ENCODE measurements at regions of chr5 and their contacts with region 1.

Region 1: DNA sequence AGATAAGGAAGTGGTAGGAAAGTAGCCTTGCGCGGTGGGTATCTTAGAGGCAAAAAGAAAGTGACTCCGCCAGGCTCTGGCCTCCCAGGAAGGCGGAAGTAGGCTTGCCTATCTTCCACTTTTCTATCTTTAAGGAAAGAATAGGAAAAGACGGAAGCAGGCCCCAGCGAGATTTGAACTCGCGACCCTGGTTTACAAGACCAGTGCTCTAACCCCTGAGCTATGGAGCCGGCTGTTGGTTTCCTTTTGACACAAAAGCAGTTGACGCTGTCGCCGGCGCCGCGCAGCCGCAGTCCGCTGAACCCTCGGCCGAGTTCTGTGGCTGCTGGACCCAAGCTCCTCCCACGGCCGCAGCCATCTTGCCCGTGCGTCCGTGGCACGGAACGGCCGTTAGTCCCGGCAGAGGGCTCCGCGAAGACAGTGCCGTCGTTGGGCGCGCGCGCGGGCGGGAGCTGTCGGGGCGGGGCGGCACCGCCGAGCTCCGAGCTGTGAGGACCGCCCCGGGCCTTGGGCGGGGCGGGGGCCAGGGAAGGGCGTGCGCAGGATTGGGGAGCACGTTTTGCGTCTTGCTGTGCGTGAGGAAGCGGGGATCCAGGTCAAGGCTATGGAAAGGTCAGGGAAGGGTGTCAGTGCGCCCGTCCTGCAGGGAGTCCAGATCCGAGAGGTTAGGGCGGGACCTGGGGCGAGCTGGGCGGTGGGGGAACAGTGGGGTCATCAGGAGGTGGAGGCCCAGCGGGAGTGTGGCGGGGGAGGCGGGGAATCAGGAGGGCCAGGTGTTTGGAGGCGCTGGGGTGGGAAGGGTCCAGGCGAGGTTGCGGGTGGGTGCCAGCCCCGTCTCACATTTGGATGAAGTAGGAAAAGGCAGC is 13.2 kb downstream of the TRIM7 start:
- DNase-seq: peak; percentile 96 to 97
- ATAC-seq: peak; percentile 90
- H3K4me3 ChIP-seq: peak overlapping the region; percentile 56 to 75
- H3K27ac ChIP-seq: peak overlapping the region in 1 of 2 donors; percentile 55
- H3K4me1 ChIP-seq: no peaks in the 10 kb centered on the region
- H3K27me3 ChIP-seq: no peaks in the 10 kb centered on the region

Region 2: GRCh38 chr5:180885872-180886418 is 305.8 kb before region 1 on chr5:
- intact Hi-C with region 1: no loop called
- DNase-seq: no peak
- ATAC-seq: no peak
- H3K4me3 ChIP-seq: no peak overlapping the region
- H3K27ac ChIP-seq: no peak overlapping the region
- H3K4me1 ChIP-seq: no peaks in the 10 kb centered on the region
- H3K27me3 ChIP-seq: no peaks in the 10 kb centered on the region

Region 3: DNA sequence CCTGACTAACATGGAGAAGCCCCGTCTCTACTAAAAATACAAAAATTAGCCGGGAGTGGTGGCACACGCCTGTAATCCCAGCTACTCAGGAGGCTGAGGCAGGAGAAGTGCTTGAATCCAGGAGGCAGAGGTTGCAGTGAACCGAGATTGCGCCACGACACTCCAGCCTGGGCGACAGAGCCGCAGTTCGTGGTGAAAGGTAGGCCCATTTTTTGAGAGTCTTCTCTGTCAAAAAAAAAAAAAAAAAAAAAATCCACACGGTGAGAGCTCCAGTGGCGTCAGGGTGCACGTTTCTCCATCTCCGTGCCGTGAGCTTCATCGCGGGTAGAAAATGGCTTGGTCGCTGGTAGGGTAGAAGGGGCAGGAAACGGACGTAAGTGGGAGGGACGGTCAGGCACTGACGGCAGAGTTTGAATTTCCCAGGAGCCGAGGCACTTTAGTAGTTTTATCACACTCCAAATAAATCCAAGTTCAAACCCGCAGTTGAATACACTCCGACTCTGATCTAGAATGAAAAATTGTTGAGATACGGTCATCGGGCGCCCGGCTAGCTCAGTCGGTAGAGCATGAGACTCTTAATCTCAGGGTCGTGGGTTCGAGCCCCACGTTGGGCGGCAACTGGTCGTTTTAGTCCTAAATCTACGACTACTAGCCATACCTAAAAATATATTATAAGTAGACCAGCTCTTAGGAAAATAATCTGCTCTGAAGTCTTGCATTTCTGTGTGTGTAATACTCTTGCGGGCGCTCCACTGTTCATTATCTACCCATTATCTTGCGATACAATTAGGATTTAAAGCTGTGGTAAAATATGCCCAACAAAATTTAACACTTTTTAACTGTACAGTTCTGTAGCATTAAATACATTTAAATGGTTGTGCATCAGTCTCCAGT is 15.7 kb after region 1 on chr5:
- intact Hi-C with region 1: loop called (anchors 1 to 2 kb)
- DNase-seq: peak; percentile 77 to 94
- ATAC-seq: peak; percentile 84
- H3K4me3 ChIP-seq: peak overlapping the region; percentile 16 to 36
- H3K27ac ChIP-seq: peak overlapping the region in 1 of 2 donors; percentile 48
- H3K4me1 ChIP-seq: no peaks in the 10 kb centered on the region
- H3K27me3 ChIP-seq: no peaks in the 10 kb centered on the region

Region 4: GRCh38 chr5:181217111-181217802 is 25.5 kb after region 1 on chr5:
- intact Hi-C with region 1: loop called (anchors 1 kb)
- DNase-seq: peak; percentile 70 to 86
- ATAC-seq: peak; percentile 70
- H3K4me3 ChIP-seq: peak overlapping the region; percentile 2 to 32
- H3K27ac ChIP-seq: peak overlapping the region in 1 of 2 donors; percentile 28
- H3K4me1 ChIP-seq: no peaks in the 10 kb centered on the region
- H3K27me3 ChIP-seq: no peaks in the 10 kb centered on the region

Region 5: GRCh38 chr5:181223058-181223728 is 31.4 kb after region 1 on chr5 and contains the start of gene TRIM41:
- intact Hi-C with region 1: loop called (anchors 1 kb)
- DNase-seq: peak; percentile 100
- ATAC-seq: peak; percentile 95
- H3K4me3 ChIP-seq: peak within 1 kb of the TSS; percentile 60 to 66
- H3K27ac ChIP-seq: peak within 1 kb of the TSS; percentile 71 to 85
- H3K4me1 ChIP-seq: no peaks in the 10 kb centered on the region
- H3K27me3 ChIP-seq: no peaks in the 10 kb centered on the region
- total RNA-seq, gene TRIM41: 15.2 to 21.4 TPM

Region 6: DNA sequence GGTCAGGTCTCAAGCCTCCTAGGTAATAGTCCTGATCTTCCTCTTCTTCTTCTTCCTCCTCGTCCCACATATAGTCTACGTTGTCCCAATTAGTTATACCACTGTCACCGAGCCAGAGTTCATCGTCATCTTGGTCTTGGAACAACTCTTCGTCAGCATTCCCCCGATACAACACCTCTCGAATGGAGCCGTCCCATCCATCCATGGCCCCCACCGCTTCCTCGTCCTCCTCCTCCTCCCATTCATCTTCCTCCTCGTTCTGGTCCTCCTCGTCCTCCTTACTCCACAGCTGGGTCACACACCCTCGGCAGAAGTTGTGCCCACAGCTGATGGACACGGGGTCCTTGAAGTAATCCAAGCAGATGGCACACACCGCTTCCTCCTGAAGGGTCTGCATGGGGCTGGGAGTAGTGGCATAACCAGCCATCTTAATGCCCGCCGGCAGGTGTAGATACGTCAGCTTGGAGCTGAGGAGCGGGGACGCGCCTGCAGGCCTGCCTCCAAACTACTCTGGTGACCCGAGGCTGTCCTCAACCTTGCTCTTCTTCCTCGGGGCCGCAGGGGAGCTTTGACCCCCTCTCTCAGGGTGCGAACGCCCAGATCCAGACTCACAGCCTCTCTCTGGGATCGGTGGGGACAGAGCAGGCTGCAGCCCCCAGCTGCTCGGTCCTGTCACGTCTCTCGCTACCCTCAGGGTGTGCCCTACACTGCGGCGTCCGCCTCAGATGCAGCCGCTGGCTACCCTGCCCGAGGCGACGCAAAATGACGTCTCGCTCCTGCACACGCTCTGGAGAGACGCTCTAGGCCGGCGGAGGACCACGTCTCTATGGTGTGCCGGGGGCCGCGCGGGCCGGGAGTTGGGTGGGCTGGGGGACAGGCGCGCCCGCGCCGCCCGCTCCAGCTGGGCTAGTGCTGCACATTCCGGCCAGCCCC is 68.9 kb after region 1 on chr5 and contains the start of gene TRIM52:
- intact Hi-C with region 1: loop called (anchors 5 to 10 kb)
- DNase-seq: peak; percentile 95 to 97
- ATAC-seq: peak; percentile 97
- H3K4me3 ChIP-seq: peak within 1 kb of the TSS; percentile 44 to 93
- H3K27ac ChIP-seq: peak within 1 kb of the TSS; percentile 75 to 98
- H3K4me1 ChIP-seq: no peaks in the 10 kb centered on the region
- H3K27me3 ChIP-seq: no peaks in the 10 kb centered on the region
- total RNA-seq, gene TRIM52: 11.9 to 18.7 TPM